ENCODE measurements at regions of chr16 and their contacts with region 1.

Region 1: GRCh38 chr16:87581833-87582203 is 20.5 kb upstream of the JPH3 start:
- DNase-seq: no peak
- H3K4me3 ChIP-seq: no peak overlapping the region
- H3K27ac ChIP-seq: no peak overlapping the region
- H3K4me1 ChIP-seq: peaks cover 1 to 15% (median 8%) of the 10 kb centered on the region in 4 experiments
- H3K27me3 ChIP-seq: 0 out of 7 replicates have a peak, but pooled peaks cover 0 to 2% (median 0%) of the 10 kb centered on the region in 4 experiments
- CTCF ChIP-seq: no peak
- EP300 ChIP-seq: no peak
- POLR2A ChIP-seq: no peak
- RAD21 ChIP-seq: no peak

Region 2: DNA sequence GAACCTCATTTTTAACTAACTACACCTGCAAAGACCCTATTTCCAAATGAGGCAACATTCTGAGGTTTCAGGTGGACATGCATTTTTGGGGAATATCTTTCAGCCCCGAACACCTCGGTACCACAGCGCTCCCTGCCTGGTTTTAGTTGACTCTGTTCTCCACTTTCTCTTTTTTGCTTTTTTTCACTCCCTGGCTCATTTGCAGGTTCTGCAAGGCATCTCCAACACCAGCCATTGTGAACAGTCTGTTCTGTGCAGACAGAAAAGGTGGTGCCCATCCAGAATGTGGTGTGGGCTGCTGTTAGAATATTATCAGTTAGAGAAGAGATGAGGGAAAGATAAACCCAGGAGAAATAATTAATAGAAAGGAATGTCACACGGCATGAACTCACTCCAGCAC is 56.5 kb before region 1 on chr16:
- CTCF ChIA-PET with region 1: no interaction called
- POLR2A ChIA-PET with region 1: no interaction called
- DNase-seq: no peak
- H3K4me3 ChIP-seq: no peak overlapping the region
- H3K27ac ChIP-seq: no peak overlapping the region
- H3K4me1 ChIP-seq: no peaks in the 10 kb centered on the region
- H3K27me3 ChIP-seq: no peaks in the 10 kb centered on the region; a peak in 2 of 7 replicates
- CTCF ChIP-seq: no peak
- EP300 ChIP-seq: no peak
- POLR2A ChIP-seq: no peak
- RAD21 ChIP-seq: no peak

Region 3: DNA sequence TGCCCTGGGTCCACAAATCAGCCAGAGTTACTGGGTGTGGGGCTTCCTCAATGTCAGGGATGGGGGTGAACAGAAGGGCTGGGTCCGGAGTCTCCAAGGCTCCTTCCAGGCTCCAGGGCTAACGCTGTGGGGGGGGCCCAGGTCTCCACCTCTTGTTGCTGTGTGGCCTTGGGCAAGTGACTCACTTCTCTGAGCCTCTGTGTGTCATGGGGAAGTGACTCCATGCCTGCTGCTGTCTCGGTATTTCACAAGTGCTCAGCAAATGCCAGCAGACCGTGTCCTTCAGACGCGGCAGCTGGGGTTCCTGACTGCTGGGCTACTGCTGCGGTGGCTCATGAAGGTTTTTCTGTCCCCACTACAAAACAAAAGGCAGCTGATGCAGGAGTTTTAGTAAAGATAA is 47.1 kb after region 1 on chr16:
- CTCF ChIA-PET with region 1: interaction called, 231 read pairs
- POLR2A ChIA-PET with region 1: no interaction called
- DNase-seq: no peak
- H3K4me3 ChIP-seq: no peak overlapping the region
- H3K27ac ChIP-seq: no peak overlapping the region
- H3K4me1 ChIP-seq: no peaks in the 10 kb centered on the region; a peak in 2 of 7 replicates
- H3K27me3 ChIP-seq: no peaks in the 10 kb centered on the region
- CTCF ChIP-seq: no peak
- EP300 ChIP-seq: no peak
- POLR2A ChIP-seq: no peak
- RAD21 ChIP-seq: no peak

Region 4: GRCh38 chr16:87644596-87644995 is 62.8 kb after region 1 on chr16:
- CTCF ChIA-PET with region 1: interaction called, 18 read pairs
- POLR2A ChIA-PET with region 1: no interaction called
- DNase-seq: no peak
- H3K4me3 ChIP-seq: no peak overlapping the region
- H3K27ac ChIP-seq: no peak overlapping the region
- H3K4me1 ChIP-seq: 0 out of 7 replicates have a peak, but pooled peaks cover 0 to 2% (median 0%) of the 10 kb centered on the region in 4 experiments
- H3K27me3 ChIP-seq: no peaks in the 10 kb centered on the region
- CTCF ChIP-seq: no peak
- EP300 ChIP-seq: no peak
- POLR2A ChIP-seq: no peak
- RAD21 ChIP-seq: no peak

Measured in H1 (cell line).